CD4-positive, alpha-beta T cell (primary cell): ENCODE measurements at regions of chr15 and their contacts with region 1.

Region 1: DNA sequence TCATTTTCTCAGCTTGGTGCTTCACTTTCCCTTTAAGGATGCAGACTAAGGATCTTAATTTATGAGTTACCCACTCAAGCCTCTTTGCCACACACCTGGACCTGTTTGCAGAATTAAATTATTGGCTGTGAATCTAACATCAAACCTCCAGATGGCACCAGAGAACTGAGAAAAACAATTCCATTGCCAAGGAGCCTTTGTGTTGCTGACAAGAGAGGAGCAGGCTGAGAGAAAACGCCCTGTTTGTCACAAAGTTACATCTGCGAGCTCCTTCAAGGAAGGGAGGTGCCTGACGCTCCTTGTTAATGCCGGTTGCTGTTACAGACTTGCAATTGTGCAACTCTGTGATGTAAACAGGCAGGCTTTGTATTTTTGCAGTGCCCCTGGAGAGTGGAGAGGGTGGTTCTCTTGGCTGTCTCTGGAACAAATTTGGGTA is 36.3 kb upstream of the TMC3 start:
- DNase-seq: peak in 6 of 14 experiments; percentile 11 to 73 (median 48)
- ATAC-seq: peak; percentile 92
- H3K4me3 ChIP-seq: no peak overlapping the region
- H3K4me3 Mint-ChIP-seq: no peak overlapping the region
- H3K27ac ChIP-seq: no peak overlapping the region
- H3K27ac Mint-ChIP-seq: no peak overlapping the region
- H3K4me1 ChIP-seq: peaks cover 12% of the 10 kb centered on the region
- H3K4me1 Mint-ChIP-seq: peaks cover 23% of the 10 kb centered on the region
- H3K27me3 ChIP-seq: peaks cover 2 to 8% of the 10 kb centered on the region in 2 experiments
- H3K27me3 Mint-ChIP-seq: peaks cover 17% of the 10 kb centered on the region
- CTCF ChIP-seq: peak; percentile 52

Region 2: DNA sequence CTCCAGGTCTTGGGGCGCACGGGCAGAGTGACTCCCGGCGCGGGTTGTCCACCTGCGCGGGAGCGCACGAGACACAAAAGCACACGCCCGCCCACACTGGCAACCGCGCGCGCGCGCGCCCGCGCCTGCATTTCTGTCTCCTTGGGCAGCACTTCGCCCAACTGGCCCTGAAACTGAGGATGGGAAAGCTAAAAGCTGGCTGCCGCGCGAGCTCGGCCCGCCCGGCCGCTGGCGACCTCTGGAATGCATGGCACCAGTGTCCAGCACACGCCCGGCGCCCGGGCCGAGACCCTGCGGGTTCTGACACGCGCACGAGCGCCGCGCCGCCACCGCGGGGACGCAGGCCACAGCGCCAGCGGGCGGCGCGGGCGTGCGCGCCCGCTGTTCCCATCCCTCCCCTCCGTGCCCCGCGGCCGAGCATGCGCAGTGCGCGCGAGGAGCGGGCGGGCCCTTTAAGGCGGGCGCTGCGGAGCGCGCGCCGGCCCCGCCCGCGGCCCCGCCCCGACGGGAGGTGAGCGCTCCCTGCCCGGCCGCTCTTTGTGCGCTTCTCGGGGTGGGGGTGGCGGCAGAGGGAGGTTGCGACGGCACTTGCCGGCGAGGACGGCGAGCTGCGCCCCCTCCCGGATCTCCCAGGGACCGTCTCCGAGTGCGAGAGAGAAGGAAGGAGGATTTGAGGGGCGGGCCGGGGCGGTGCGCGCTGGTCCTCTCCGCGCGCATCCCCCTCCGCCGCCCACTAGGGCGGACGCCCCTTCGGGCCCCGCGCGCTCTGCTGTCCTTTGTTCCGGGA is 636.5 kb after region 1 on chr15:
- CTCF ChIA-PET with region 1: no interaction called
- POLR2A ChIA-PET with region 1: no interaction called
- intact Hi-C with region 1: loop called in 1 of 2 experiments (anchors 10 kb)
- DNase-seq: peak; percentile 70 to 96 (median 86)
- ATAC-seq: peak; percentile 78
- H3K4me3 ChIP-seq: peak overlapping the region; percentile 84
- H3K4me3 Mint-ChIP-seq: peak overlapping the region; percentile 95
- H3K27ac ChIP-seq: peak overlapping the region; percentile 67 to 73
- H3K27ac Mint-ChIP-seq: peak overlapping the region; percentile 90
- H3K4me1 ChIP-seq: peaks cover 28% of the 10 kb centered on the region
- H3K4me1 Mint-ChIP-seq: peaks cover 12% of the 10 kb centered on the region
- H3K27me3 ChIP-seq: peaks cover 2 to 4% of the 10 kb centered on the region in 2 experiments
- H3K27me3 Mint-ChIP-seq: peaks cover 9% of the 10 kb centered on the region
- CTCF ChIP-seq: peak; percentile 62

Region 3: GRCh38 chr15:82139823-82140268 is 729.5 kb after region 1 on chr15:
- CTCF ChIA-PET with region 1: no interaction called
- POLR2A ChIA-PET with region 1: interaction called, 3 read pairs
- intact Hi-C with region 1: loop called in 1 of 2 experiments (anchors 5 kb)
- DNase-seq: peak in 3 of 14 experiments; percentile 22 to 52 (median 47)
- ATAC-seq: peak; percentile 49
- H3K4me3 ChIP-seq: no peak overlapping the region
- H3K4me3 Mint-ChIP-seq: no peak overlapping the region
- H3K27ac ChIP-seq: no peak overlapping the region
- H3K27ac Mint-ChIP-seq: peak overlapping the region; percentile 2
- H3K4me1 ChIP-seq: no peaks in the 10 kb centered on the region
- H3K4me1 Mint-ChIP-seq: peaks cover 9% of the 10 kb centered on the region
- H3K27me3 ChIP-seq: no peaks in the 10 kb centered on the region
- H3K27me3 Mint-ChIP-seq: no peaks in the 10 kb centered on the region
- CTCF ChIP-seq: peak; percentile 74

Region 4: DNA sequence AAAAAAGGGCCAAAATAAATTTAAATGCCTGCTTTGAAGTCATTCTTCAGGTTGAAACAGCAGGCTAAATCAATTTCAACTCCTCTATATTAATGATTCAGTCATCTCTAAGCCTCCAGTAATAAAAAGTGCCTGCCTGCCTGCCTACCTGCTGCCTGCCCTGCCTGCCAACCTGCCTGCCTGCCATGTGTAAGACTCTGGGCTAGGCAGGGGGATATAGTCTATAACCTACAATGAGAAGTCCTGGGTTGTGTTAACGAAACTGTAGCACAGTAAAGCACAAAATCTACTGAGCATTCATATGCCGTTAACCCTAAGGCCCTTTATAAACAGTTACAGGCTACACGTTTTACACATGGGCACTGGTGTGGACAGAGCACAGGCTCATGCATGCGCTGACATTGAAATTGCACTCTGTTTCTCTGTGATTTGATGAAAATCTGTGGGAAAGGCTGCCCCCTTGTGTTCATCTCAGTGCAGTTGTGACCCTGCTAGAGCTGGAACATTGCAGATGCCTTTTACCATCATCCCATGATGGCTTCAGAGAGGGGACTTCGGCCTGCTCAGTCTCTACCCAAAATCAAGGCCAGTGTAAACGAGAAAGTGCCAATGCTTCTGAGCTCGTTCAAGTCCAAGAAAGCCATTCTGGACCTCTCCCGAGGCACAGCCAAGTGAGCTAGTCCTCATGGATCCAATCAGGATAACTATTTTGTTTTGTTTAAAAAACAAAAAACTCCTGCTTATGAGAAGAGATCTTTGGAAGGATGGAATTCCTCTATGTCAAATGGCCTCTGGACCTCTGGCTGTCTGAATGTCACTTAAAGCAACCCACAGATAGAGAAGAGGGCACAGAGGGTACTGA is 787.6 kb after region 1 on chr15:
- CTCF ChIA-PET with region 1: no interaction called
- POLR2A ChIA-PET with region 1: no interaction called
- intact Hi-C with region 1: loop called in 1 of 2 experiments (anchors 2 kb)
- DNase-seq: peak; percentile 17 to 72 (median 41)
- ATAC-seq: peak; percentile 68
- H3K4me3 ChIP-seq: no peak overlapping the region
- H3K4me3 Mint-ChIP-seq: no peak overlapping the region
- H3K27ac ChIP-seq: no peak overlapping the region
- H3K27ac Mint-ChIP-seq: no peak overlapping the region
- H3K4me1 ChIP-seq: no peaks in the 10 kb centered on the region
- H3K4me1 Mint-ChIP-seq: no peaks in the 10 kb centered on the region
- H3K27me3 ChIP-seq: no peaks in the 10 kb centered on the region
- H3K27me3 Mint-ChIP-seq: no peaks in the 10 kb centered on the region
- CTCF ChIP-seq: peak; percentile 63